H1 (cell line): ENCODE measurements at regions of chr4 and their contacts with region 1.

Region 1: DNA sequence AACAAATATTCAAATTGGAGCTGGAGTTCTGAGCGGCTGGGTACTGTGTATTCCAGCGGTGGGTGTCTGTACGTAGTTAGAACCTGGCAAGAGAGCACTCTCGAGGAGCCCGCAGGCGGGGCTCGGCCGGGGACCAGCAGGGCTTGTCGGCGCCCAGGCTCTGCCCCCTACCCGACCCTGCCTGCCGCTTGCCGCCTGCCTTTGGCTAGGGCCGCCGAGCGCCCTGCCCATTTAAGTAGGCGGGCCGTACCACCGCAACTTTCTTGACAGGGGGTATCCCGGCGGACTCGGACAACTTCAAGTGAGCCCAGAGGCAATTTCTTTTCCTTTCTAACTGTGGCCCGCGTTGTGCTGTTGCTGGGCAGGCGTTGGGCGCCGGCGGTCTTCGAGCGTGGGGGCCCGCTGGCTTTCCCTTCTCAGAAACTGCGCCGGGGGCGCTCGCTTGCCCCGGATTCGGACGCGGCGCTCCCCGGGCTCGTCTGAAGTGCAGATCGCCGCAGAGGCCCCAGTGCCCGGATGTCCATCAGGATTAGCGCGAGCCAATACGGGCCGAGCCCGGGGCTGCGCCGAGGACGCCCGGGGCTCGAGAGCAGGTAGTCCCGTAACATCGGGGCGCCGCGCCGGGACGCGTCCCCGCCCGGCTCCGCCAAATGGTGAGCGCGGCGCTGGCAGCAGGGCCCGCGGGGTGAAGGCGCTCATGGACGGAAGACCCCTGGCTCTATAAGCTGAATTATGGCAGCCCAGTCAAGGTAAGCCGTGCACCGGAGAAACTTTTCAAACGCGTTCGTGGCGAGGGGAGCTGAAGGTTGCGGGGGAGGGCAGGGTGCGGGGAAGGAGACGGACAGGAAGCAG is 72.1 kb downstream of the AFF1 start:
- DNase-seq: peak; percentile 79 to 93
- H3K4me3 ChIP-seq: peak overlapping the region; percentile 63 to 94 (median 88)
- H3K27ac ChIP-seq: peak overlapping the region; percentile 88
- H3K4me1 ChIP-seq: peaks cover 9 to 28% (median 23%) of the 10 kb centered on the region in 4 experiments; a peak in 6 of 7 replicates
- H3K27me3 ChIP-seq: no peaks in the 10 kb centered on the region
- CTCF ChIP-seq: no peak; a peak in 2 of 4 replicates
- EP300 ChIP-seq: peak in 1 of 2 experiments; percentile 94; a peak in 2 of 3 replicates
- POLR2A ChIP-seq: peak; percentile 99
- RAD21 ChIP-seq: peak in 1 of 2 experiments; percentile 14; a peak in 1 of 4 replicates

Region 2: DNA sequence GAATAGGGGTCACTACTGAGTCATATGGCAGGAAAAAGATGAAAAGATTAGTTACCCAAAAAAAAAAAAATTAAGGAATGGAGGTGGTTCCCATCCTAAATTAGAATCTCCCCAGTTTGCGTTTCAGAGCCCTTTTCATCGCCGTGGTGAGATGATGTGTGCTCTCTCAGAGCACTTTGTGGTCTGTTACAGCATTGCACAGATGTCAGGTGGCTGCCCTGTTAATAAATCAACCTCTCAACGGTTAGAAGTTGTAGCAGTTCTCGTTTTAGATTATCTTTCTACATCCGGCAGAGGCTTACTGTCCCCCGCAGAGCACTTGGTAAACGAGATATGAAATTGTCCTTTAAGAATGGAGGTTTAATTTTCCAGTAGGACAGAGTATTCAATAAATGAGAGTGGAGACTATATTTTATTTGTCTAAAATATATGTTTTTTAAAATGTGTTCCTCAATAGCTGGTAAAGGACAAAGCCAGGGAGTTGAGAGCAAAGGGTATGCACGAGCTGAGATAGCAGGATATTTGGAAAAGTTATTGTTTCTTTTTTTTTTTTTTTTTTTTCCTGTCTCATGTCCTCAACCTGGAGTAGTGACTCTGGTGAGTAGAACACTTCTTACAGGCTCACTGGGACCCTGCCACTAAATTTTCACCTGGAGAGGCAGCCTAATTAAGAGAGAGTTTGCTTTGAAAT is 45.2 kb before region 1 on chr4:
- CTCF ChIA-PET with region 1: interaction called, 5 read pairs
- POLR2A ChIA-PET with region 1: interaction called, 31 read pairs
- DNase-seq: no peak
- H3K4me3 ChIP-seq: peak overlapping the region in 1 of 4 experiments; percentile 43; a peak in 1 of 8 replicates
- H3K27ac ChIP-seq: no peak overlapping the region
- H3K4me1 ChIP-seq: peaks cover 15 to 40% (median 30%) of the 10 kb centered on the region in 4 experiments; a peak in 6 of 7 replicates
- H3K27me3 ChIP-seq: no peaks in the 10 kb centered on the region
- CTCF ChIP-seq: no peak
- EP300 ChIP-seq: no peak
- POLR2A ChIP-seq: no peak
- RAD21 ChIP-seq: no peak

Region 3: DNA sequence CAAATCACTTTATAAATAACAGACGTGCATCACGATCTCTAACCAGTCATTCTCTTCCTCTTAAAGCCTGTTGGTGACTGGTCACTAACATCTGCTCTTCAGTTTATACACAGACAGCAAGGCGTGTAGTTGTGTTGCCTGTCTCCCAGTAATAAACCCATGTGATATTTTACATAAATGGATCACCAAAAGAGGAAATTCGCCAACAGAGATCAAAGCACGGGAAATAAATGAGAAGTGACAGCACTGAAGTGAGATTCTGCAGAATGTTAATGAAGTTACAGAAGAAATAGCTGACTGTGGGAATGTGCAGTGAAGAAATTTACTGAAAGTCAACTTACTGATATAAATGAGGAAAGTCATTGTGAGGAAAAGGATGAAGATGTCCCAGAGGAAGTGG is 25.1 kb before region 1 on chr4:
- CTCF ChIA-PET with region 1: interaction called, 3 read pairs
- POLR2A ChIA-PET with region 1: interaction called, 12 read pairs
- DNase-seq: no peak
- H3K4me3 ChIP-seq: no peak overlapping the region
- H3K27ac ChIP-seq: no peak overlapping the region
- H3K4me1 ChIP-seq: no peaks in the 10 kb centered on the region
- H3K27me3 ChIP-seq: no peaks in the 10 kb centered on the region
- CTCF ChIP-seq: no peak
- EP300 ChIP-seq: no peak
- POLR2A ChIP-seq: no peak
- RAD21 ChIP-seq: no peak

Region 4: GRCh38 chr4:87024666-87025613 is 18.0 kb after region 1 on chr4:
- CTCF ChIA-PET with region 1: interaction called, 5 read pairs
- POLR2A ChIA-PET with region 1: interaction called, 11 read pairs
- DNase-seq: no peak
- H3K4me3 ChIP-seq: no peak overlapping the region
- H3K27ac ChIP-seq: no peak overlapping the region
- H3K4me1 ChIP-seq: peaks cover 1 to 9% (median 8%) of the 10 kb centered on the region in 4 experiments; a peak in 5 of 7 replicates
- H3K27me3 ChIP-seq: no peaks in the 10 kb centered on the region
- CTCF ChIP-seq: no peak
- EP300 ChIP-seq: no peak
- POLR2A ChIP-seq: no peak
- RAD21 ChIP-seq: no peak

Region 5: GRCh38 chr4:87068583-87069021 is 61.7 kb after region 1 on chr4:
- CTCF ChIA-PET with region 1: no interaction called
- POLR2A ChIA-PET with region 1: no interaction called
- DNase-seq: no peak
- H3K4me3 ChIP-seq: no peak overlapping the region
- H3K27ac ChIP-seq: no peak overlapping the region
- H3K4me1 ChIP-seq: peaks cover 0 to 12% (median 0%) of the 10 kb centered on the region in 4 experiments; a peak in 3 of 7 replicates
- H3K27me3 ChIP-seq: no peaks in the 10 kb centered on the region
- CTCF ChIP-seq: no peak
- EP300 ChIP-seq: no peak
- POLR2A ChIP-seq: no peak
- RAD21 ChIP-seq: no peak